IMR-90 (cell line): ENCODE measurements at regions of chr2 and their contacts with region 1.

Region 1: DNA sequence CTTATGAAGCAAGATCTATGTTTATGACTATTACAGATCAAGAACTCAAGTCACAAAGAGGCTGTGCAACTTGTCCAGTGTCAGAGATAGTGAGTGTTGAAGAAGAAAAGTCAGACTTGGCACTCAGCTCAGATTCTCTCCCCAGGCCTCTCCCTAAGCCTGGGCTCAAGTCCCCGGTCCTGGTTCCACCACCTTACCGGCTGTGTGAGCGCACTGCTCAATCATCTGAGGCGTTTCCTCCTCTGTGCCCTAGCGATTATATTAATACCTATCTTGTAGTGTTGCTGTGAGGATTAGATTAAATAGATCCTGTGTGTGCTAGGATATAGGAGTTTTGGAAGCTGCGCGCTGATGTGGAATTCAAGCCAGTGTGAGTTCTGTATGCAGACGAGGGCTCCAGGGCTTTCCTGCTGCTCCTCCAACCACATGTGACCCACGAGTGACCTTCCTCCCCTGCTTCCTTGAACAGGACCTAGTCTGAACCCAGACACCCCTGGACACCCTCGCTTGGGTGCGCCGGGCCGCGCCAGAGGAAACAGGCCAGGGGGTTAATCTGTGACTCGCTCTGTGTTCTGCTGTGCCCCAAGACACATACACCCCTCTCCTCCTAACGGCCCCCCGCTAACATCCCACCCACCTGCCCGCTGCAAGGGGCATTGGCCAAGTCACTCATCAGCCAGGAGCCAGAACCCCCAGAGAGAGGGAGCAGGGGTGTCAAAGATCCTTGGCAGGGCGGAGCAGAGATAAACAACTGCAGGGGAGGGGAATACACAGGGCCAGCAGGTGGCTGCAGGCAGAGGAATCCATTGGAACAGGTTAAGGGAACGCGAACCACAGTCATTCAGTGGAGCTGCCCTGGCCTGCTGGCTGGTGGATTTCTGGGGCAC is 38.3 kb downstream of the TNS1 start:
- DNase-seq: no peak
- ATAC-seq: no peak
- H3K4me3 ChIP-seq: no peak overlapping the region
- H3K27ac ChIP-seq: peak overlapping the region; percentile 63
- H3K4me1 ChIP-seq: peaks cover 43% of the 10 kb centered on the region
- H3K27me3 ChIP-seq: no peaks in the 10 kb centered on the region
- CTCF ChIP-seq: no peak
- POLR2A ChIP-seq: no peak
- RAD21 ChIP-seq: no peak

Region 2: GRCh38 chr2:217256251-217256650 is 708.3 kb before region 1 on chr2:
- CTCF ChIA-PET with region 1: no interaction called
- POLR2A ChIA-PET with region 1: interaction called, 13 read pairs
- dilution Hi-C with region 1: no loop called
- in situ Hi-C with region 1: no loop called
- intact Hi-C with region 1: no loop called
- DNase-seq: peak; percentile 51
- ATAC-seq: peak; percentile 59
- H3K4me3 ChIP-seq: no peak overlapping the region
- H3K27ac ChIP-seq: peak overlapping the region; percentile 32; the same call in 1 of the 2 replicates
- H3K4me1 ChIP-seq: peaks cover 10% of the 10 kb centered on the region
- H3K27me3 ChIP-seq: no peaks in the 10 kb centered on the region
- CTCF ChIP-seq: no peak
- POLR2A ChIP-seq: no peak
- RAD21 ChIP-seq: no peak

Region 3: GRCh38 chr2:217899231-217900009 is 65.1 kb before region 1 on chr2:
- CTCF ChIA-PET with region 1: no interaction called
- POLR2A ChIA-PET with region 1: no interaction called
- dilution Hi-C with region 1: no loop called
- in situ Hi-C with region 1: no loop called
- intact Hi-C with region 1: loop called (anchors 2 kb)
- DNase-seq: peak; percentile 91
- ATAC-seq: peak; percentile 79
- H3K4me3 ChIP-seq: no peak overlapping the region
- H3K27ac ChIP-seq: peak overlapping the region; percentile 71
- H3K4me1 ChIP-seq: peaks cover 41% of the 10 kb centered on the region
- H3K27me3 ChIP-seq: no peaks in the 10 kb centered on the region
- CTCF ChIP-seq: peak; percentile 87
- POLR2A ChIP-seq: 0 out of 2 replicates have a peak, but pooled peaks have one; percentile 16
- RAD21 ChIP-seq: peak; percentile 65

Region 4: GRCh38 chr2:217934321-217935131 is 30.0 kb before region 1 on chr2:
- CTCF ChIA-PET with region 1: no interaction called
- POLR2A ChIA-PET with region 1: no interaction called
- dilution Hi-C with region 1: no loop called
- in situ Hi-C with region 1: no loop called
- intact Hi-C with region 1: loop called (anchors 2 kb)
- DNase-seq: peak; percentile 96
- ATAC-seq: peak; percentile 75
- H3K4me3 ChIP-seq: no peak overlapping the region
- H3K27ac ChIP-seq: peak overlapping the region; percentile 84
- H3K4me1 ChIP-seq: peaks cover 71% of the 10 kb centered on the region
- H3K27me3 ChIP-seq: no peaks in the 10 kb centered on the region
- CTCF ChIP-seq: no peak
- POLR2A ChIP-seq: peak; percentile 51; the same call in 1 of the 2 replicates
- RAD21 ChIP-seq: peak; percentile 8

Region 5: DNA sequence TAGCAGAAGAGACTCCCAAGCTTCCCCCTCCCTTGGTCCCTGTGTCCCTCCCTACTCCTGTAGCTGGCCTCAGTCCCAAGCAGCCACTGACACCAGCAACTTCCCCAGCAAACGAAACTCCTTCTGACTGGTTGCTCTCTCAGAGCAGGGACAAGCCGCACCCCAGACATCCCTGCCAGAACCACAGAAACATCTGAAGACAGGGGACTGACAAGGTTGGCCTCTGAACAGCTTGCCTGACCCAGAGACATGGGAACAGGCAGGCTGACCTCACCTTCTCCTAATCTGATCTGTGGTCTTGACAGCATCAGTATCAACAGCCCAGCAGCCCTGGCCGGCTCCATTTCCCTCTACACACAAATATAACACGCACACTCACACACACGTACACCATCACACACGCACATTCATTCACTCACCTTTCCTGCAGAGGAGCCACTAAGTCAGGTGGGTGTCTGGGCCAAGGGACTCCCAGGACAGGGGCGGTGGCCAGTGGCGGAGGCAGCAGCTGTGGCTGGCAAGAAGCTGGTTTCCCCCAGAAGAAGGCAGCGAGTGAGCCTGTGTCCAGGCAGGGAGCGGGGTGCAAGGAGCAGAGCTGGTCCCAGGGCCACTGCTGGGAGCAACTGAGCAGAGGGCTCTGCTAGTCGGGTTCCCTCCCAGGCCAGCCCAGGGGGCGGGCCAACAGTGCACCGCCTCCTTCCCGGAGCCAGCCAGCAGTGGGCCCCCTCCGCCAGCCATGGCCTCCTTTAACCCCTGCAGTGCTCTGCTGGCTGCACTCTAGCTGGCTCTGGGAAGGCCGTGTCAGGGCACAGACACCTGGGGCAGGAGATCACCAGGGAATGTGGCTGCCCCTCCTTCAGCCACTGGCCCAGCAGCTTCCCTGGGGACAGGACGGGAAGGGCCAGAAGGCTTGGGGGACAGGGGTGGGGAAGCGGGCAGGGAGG is 20.8 kb before region 1 on chr2:
- CTCF ChIA-PET with region 1: no interaction called
- POLR2A ChIA-PET with region 1: no interaction called
- dilution Hi-C with region 1: no loop called
- in situ Hi-C with region 1: no loop called
- intact Hi-C with region 1: loop called (anchors 2 kb)
- DNase-seq: peak; percentile 58
- ATAC-seq: peak; percentile 98
- H3K4me3 ChIP-seq: peak overlapping the region; percentile 63
- H3K27ac ChIP-seq: peak overlapping the region; percentile 74
- H3K4me1 ChIP-seq: peaks cover 23% of the 10 kb centered on the region
- H3K27me3 ChIP-seq: no peaks in the 10 kb centered on the region
- CTCF ChIP-seq: peak; percentile 63
- POLR2A ChIP-seq: peak; percentile 90
- RAD21 ChIP-seq: peak; percentile 75